ENCODE measurements at regions of chr19 and their contacts with region 1.

Region 1: DNA sequence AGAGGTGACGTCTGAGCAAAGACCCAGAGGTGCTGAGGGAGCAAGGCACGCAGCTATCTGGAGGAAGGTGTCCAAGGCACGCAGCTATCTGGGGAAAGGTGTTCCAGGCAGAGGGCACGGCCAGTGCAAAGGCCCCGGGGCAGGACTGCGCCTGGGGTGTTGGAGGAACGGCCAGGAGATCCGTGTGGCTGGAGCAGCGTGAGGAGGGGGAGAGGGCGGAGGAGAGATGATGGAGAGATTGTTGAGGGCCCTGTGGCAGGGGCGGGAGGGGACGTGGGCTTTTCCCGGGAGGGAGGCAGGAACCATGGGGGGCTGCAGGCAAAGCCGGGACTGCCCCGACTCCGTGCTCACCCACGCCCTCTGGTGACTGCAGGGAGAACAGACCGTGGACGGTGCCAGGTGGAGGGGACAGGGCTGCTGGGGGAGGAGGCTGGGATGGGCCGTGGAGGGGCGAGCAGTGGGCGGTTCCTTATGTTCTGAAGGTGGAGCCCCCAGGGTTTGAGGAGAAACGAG is 13.3 kb upstream of the MISP start:
- DNase-seq: peak in 30 of 42 donors; percentile 19 to 74 (median 50)

Region 2: DNA sequence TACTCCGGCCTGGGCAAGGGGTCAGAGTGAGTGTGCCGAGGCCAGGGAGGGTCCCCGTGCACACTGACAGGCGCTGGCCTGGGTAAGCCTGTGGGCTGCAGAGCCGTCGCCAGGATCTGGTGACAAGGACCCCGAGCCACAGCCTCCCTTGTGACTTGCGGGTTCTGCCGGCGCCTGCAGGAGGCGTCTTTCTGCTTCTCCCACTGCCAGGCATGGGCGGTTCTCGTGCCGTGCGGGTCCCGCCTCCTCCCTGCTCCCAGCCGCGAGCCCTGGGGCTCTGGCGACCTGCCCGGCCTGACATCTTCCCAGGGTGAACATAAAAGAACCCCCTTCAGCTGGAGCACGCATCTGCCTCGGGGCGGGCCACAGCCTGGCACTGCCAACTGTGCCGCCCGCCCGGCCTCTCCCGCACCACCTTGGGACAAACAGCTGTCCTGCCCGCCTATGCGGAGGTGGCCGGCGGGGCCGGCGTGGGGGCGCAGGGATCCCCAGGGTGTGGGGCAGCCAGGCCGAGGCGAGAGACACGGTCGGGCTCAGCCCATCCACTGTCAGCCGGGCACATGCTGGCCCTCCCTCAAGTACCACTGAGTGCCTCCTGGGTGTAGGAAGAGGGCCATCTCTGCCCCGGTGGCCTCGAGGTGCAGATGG is 149.4 kb before region 1 on chr19:
- intact Hi-C with region 1: loop called (anchors 10 kb)
- DNase-seq: peak; percentile 80 to 98 (median 93)

Region 3: DNA sequence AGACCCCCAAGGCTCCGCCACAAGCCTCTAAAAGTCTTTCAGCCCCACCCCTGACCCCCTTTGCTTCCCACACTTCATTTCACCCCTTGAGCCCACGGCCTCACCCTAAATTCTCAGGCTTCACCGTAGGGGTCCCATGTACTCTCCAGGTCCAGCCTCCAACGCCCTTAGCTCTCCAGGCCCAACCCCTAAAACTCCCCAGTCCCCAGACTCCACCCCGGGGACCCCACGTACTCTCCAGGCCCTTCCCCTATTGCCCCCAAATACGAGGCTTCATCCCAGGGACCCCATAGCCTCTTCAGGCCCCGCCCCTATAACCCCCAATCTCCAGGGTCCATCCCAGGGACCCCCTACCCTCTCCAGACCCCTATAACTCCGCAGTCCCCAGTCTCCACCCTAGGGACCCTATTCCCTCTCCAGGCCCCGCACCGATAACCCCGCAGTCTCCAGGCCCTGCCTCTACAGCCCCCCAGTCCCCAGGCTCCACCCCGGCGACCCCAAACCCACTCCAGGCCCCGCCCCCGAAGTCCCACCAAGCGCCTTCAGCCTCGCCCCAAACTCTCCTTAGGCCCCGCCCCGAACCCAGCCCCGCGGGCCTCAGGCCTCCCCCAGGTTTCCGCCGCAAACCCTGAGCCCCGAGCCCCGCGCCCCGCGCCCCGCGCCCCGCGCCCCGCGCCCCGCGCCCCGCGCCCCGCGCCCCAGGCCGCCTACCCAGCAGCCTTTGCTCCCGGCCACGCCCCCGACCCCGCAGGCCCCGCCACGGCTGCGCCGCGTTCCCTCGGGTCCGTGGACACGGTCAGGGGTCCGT is 154.8 kb after region 1 on chr19:
- intact Hi-C with region 1: no loop called
- DNase-seq: no peak

Measured in head of caudate nucleus (tissue), 42 donors.